ENCODE measurements at regions of chr15 and their contacts with region 1.

Region 1: GRCh38 chr15:68550481-68551295 is 28.1 kb upstream of the CORO2B start:
- DNase-seq: peak; percentile 81
- H3K4me3 Mint-ChIP-seq: no peak overlapping the region
- H3K27ac Mint-ChIP-seq: no peak overlapping the region
- H3K4me1 Mint-ChIP-seq: peaks cover 6% of the 10 kb centered on the region
- H3K27me3 Mint-ChIP-seq: peaks cover 49% of the 10 kb centered on the region

Region 2: DNA sequence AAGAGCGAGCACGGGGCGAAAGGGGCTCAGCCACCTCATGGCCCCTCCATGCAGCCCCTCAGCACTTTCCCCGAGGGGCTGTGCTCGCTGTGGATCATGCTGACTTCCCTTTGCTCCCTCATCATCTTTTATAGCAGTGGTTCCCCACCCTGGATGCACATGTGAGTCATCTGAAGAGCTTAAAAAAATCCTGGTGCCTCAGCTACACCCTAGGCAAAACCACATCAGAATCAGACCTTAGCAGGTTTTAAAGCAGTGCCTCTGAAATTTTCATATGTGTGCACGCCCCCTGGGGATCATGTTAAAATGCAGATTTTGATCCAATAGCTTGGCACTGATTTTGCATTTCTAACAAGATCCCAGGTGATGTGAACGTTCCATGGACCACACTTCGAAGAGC is 222.2 kb before region 1 on chr15:
- CTCF ChIA-PET with region 1: no interaction called
- POLR2A ChIA-PET with region 1: no interaction called
- intact Hi-C with region 1: no loop called
- DNase-seq: no peak
- H3K4me3 Mint-ChIP-seq: no peak overlapping the region
- H3K27ac Mint-ChIP-seq: no peak overlapping the region
- H3K4me1 Mint-ChIP-seq: peaks cover 6% of the 10 kb centered on the region
- H3K27me3 Mint-ChIP-seq: peaks cover 6% of the 10 kb centered on the region

Region 3: GRCh38 chr15:68536331-68537095 is 14.2 kb before region 1 on chr15:
- CTCF ChIA-PET with region 1: interaction called, 16 read pairs
- POLR2A ChIA-PET with region 1: no interaction called
- intact Hi-C with region 1: no loop called
- DNase-seq: no peak
- H3K4me3 Mint-ChIP-seq: no peak overlapping the region
- H3K27ac Mint-ChIP-seq: no peak overlapping the region
- H3K4me1 Mint-ChIP-seq: no peaks in the 10 kb centered on the region
- H3K27me3 Mint-ChIP-seq: peaks cover 20% of the 10 kb centered on the region

Region 4: DNA sequence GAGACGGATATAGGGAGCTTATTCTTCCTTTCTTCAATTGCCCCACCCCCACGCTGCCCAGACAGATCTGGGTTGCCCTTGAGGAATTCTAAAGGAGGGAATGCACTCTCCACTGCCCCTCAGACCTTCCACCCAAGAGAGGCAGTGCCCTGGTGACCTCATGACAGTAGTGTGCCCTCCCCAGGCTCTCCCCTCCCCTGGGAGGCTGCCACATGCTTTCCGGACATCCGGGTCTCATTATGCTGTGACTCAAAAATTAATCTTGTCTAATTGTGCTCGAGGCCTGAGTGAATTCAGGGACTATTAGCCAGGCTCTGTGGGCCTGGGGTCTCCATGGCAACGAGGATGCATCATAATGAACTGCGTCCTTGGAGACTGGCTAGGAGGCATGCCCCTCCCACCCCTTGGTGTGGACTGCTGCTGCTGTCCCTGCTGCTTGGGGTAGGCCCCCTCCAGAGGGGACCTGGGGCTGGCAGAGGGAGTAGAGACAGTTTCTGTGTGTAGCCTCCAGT is 48.9 kb after region 1 on chr15:
- CTCF ChIA-PET with region 1: no interaction called
- POLR2A ChIA-PET with region 1: no interaction called
- intact Hi-C with region 1: no loop called
- DNase-seq: no peak
- H3K4me3 Mint-ChIP-seq: no peak overlapping the region
- H3K27ac Mint-ChIP-seq: no peak overlapping the region
- H3K4me1 Mint-ChIP-seq: no peaks in the 10 kb centered on the region
- H3K27me3 Mint-ChIP-seq: peaks cover 11% of the 10 kb centered on the region

Region 5: GRCh38 chr15:68924866-68925560 is 374.3 kb after region 1 on chr15:
- CTCF ChIA-PET with region 1: interaction called, 19 read pairs
- POLR2A ChIA-PET with region 1: no interaction called
- intact Hi-C with region 1: no loop called
- DNase-seq: peak; percentile 75
- H3K4me3 Mint-ChIP-seq: no peak overlapping the region
- H3K27ac Mint-ChIP-seq: no peak overlapping the region
- H3K4me1 Mint-ChIP-seq: no peaks in the 10 kb centered on the region
- H3K27me3 Mint-ChIP-seq: peaks cover 17% of the 10 kb centered on the region

Measured in activated CD4-positive, alpha-beta memory T cell treated with anti-CD3 and anti-CD28 coated beads for 36 hours (primary cell).